ENCODE measurements at regions of chr15 and their contacts with region 1.

Region 1: GRCh38 chr15:76311100-76311953 is at the start of gene ETFA:
- DNase-seq: peak; percentile 100

Region 2: GRCh38 chr15:76012021-76012551 is 299.2 kb before region 1 on chr15 and contains the start of gene NRG4:
- CTCF ChIA-PET with region 1: interaction called, 12 read pairs
- POLR2A ChIA-PET with region 1: no interaction called
- DNase-seq: peak; percentile 33

Region 3: GRCh38 chr15:76299786-76300185 is 11.5 kb before region 1 on chr15:
- CTCF ChIA-PET with region 1: no interaction called
- POLR2A ChIA-PET with region 1: no interaction called
- DNase-seq: no peak

Region 4: GRCh38 chr15:76324066-76324465 is 12.7 kb after region 1 on chr15:
- CTCF ChIA-PET with region 1: interaction called, 6 read pairs
- POLR2A ChIA-PET with region 1: interaction called, 14 read pairs
- DNase-seq: no peak